ENCODE measurements at regions of chrX and their contacts with region 1.

Region 1: GRCh38 chrX:53071604-53072417 is 10.4 kb upstream of the TSPYL2 start:
- DNase-seq: peak; percentile 79 to 82 (median 81)
- H3K4me3 ChIP-seq: peak overlapping the region in 1 of 2 donors; percentile 52
- H3K4me3 Mint-ChIP-seq: peak overlapping the region; percentile 86 to 92 (median 90)
- H3K27ac ChIP-seq: no peak overlapping the region
- H3K27ac Mint-ChIP-seq: peak overlapping the region; percentile 68 to 95 (median 92)
- H3K4me1 ChIP-seq: peaks cover 9% of the 10 kb centered on the region
- H3K4me1 Mint-ChIP-seq: peaks cover 11 to 23% (median 14%) of the 10 kb centered on the region in 4 donors
- H3K27me3 ChIP-seq: no peaks in the 10 kb centered on the region
- H3K27me3 Mint-ChIP-seq: peaks cover 3% of the 10 kb centered on the region in 2 donors

Region 2: GRCh38 chrX:53088136-53088974 is 16.5 kb after region 1 on chrX:
- CTCF ChIA-PET with region 1: interaction called, 33 read pairs
- POLR2A ChIA-PET with region 1: interaction called, 62 read pairs
- intact Hi-C with region 1: loop called (anchors 1 kb)
- DNase-seq: peak; percentile 80 to 92 (median 84)
- H3K4me3 ChIP-seq: peak overlapping the region; percentile 17 to 47
- H3K4me3 Mint-ChIP-seq: peak overlapping the region; percentile 88 to 97 (median 93)
- H3K27ac ChIP-seq: peak overlapping the region; percentile 90
- H3K27ac Mint-ChIP-seq: peak overlapping the region; percentile 98 to 100 (median 99)
- H3K4me1 ChIP-seq: peaks cover 27% of the 10 kb centered on the region
- H3K4me1 Mint-ChIP-seq: peaks cover 32 to 62% (median 38%) of the 10 kb centered on the region in 4 donors
- H3K27me3 ChIP-seq: no peaks in the 10 kb centered on the region
- H3K27me3 Mint-ChIP-seq: no peaks in the 10 kb centered on the region

Region 3: DNA sequence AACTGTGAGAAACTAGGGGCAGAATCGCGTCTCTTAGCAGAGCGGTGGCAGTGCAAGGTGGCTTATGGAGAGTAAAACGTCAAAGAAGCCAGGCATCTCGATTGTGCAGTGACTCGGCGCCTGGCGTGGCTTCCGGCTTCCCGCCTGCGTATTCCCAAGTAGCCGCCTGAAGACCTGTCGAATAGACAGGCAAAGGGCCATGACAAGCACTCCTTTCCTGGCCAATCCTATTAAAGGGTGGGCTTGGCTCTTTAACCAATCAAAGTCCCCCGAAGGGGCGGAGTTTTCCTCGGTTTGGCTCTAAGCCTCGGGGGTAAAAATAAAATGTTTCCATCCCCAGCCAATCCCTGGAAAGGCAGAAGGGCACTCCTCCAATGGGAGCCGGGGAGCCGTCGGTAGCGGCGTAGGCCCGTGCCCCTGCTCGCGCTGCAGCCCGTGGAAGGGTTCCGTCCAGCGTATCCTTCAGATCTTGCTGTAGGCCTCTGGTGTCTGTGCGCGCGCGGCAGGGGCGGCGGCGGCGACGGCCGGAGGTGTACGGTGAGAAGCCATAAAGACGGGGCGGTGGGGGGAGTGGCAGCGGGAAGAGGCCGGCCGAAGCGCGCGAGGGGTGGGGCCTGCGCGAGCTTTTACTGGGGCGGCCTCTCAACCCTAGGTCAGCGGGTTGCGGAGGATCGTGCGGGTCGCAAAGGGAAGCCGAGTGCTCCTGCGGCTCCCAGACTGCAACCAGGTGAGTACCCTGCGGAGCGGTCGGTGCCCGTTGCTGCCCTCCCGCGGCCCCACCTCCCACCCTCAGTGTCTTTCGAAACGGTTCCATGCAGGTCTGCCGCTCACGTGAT is 22.2 kb after region 1 on chrX and contains the start of gene KANTR:
- CTCF ChIA-PET with region 1: interaction called, 33 read pairs
- POLR2A ChIA-PET with region 1: interaction called, 16 read pairs
- intact Hi-C with region 1: loop called (anchors 1 kb)
- DNase-seq: peak; percentile 83 to 92 (median 84)
- H3K4me3 ChIP-seq: peak within 1 kb of the TSS; percentile 29 to 58
- H3K4me3 Mint-ChIP-seq: peak within 1 kb of the TSS; percentile 84 to 93 (median 89)
- H3K27ac ChIP-seq: peak within 1 kb of the TSS; percentile 55
- H3K27ac Mint-ChIP-seq: peak within 1 kb of the TSS; percentile 87 to 92 (median 91)
- H3K4me1 ChIP-seq: peaks cover 9% of the 10 kb centered on the region
- H3K4me1 Mint-ChIP-seq: peaks cover 7 to 35% (median 19%) of the 10 kb centered on the region in 4 donors
- H3K27me3 ChIP-seq: no peaks in the 10 kb centered on the region
- H3K27me3 Mint-ChIP-seq: no peaks in the 10 kb centered on the region
- total RNA-seq, gene KANTR: 19.9 to 23.4 TPM

Region 4: GRCh38 chrX:53686151-53686885 is 614.5 kb after region 1 on chrX and contains the start of gene HUWE1:
- CTCF ChIA-PET with region 1: no interaction called
- POLR2A ChIA-PET with region 1: no interaction called
- intact Hi-C with region 1: no loop called
- DNase-seq: peak; percentile 73 to 83 (median 75)
- H3K4me3 ChIP-seq: peak within 1 kb of the TSS; percentile 63 to 76
- H3K4me3 Mint-ChIP-seq: peak within 1 kb of the TSS; percentile 88 to 97 (median 90)
- H3K27ac ChIP-seq: peak within 1 kb of the TSS; percentile 80
- H3K27ac Mint-ChIP-seq: peak within 1 kb of the TSS; percentile 81 to 99 (median 94)
- H3K4me1 ChIP-seq: peaks cover 30% of the 10 kb centered on the region
- H3K4me1 Mint-ChIP-seq: peaks cover 11 to 40% (median 22%) of the 10 kb centered on the region in 4 donors
- H3K27me3 ChIP-seq: no peaks in the 10 kb centered on the region
- H3K27me3 Mint-ChIP-seq: no peaks in the 10 kb centered on the region
- total RNA-seq, gene HUWE1: 176 to 202 TPM

Measured in CD4-positive, alpha-beta memory T cell (primary cell).